GM12878 (cell line): ENCODE measurements at regions of chr7 and their contacts with region 1.

Region 1: DNA sequence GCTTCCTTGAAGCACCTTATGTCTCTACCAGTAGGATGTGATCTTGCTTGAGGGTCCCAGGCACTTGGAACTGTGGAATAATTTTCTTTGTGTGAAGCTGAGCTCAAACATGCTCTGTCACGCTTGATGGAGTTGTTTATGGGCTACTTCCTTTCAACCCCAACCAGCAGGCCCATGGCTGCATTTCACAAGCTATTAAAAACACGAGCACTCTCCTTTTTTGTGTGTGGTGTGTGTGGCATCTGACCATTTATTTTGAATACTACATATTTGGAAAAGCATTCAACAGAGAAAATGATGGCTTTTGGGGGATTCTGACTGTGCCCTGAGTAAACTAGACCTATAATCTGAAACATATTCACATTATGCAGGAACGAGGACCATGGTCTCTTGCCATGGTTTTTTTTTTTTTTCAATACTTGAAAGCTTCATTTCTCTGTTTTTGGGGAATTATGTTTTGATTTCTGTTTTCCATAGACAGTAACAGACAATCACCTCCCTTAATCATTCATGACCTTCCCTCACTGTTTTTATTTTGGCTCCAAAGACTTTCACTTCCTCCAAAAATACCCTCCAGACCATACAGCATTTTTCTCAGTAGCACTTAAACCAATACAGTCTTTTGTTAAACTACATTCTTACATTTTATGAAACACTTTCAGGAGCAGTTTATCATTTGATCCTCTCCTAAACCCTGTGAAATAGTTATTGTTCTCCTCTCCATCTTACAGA is 233.6 kb upstream of the BMPER start:
- DNase-seq: peak; percentile 42
- ATAC-seq: peak; percentile 75
- H3K4me3 ChIP-seq: no peak overlapping the region
- H3K27ac ChIP-seq: no peak overlapping the region
- H3K4me1 ChIP-seq: peaks cover 3% of the 10 kb centered on the region; the same call in 1 of the 2 replicates
- H3K27me3 ChIP-seq: no peaks in the 10 kb centered on the region
- CTCF ChIP-seq: no peak
- EP300 ChIP-seq: no peak
- POLR2A ChIP-seq: no peak
- RAD21 ChIP-seq: no peak

Region 2: DNA sequence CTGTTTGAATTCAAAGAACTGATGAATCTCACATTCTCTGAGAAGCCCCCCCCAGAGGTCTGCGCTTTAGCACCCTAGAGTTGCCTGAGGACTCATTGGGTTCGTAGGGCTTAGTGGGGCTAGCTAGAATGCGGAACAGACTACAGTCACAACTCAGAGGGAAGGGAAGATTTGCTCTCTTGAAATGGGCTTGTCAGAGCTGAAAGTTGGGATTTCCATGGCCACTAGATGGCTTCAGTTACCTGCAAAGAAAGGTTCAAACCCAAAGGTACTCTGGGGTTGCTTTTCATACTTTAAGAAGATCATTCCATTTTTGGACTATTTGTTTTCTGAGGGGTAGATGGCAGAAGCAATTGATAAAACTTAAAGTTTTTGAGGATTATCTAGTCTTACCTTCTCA is 337.3 kb before region 1 on chr7:
- CTCF ChIA-PET with region 1: no interaction called
- POLR2A ChIA-PET with region 1: no interaction called
- RAD21 ChIA-PET with region 1: no interaction called
- SMC1A ChIA-PET with region 1: no interaction called
- in situ Hi-C with region 1: no loop called
- intact Hi-C with region 1: no loop called
- DNase-seq: no peak
- ATAC-seq: peak; percentile 46; the same call in 2 of the 3 replicates
- H3K4me3 ChIP-seq: no peak overlapping the region
- H3K27ac ChIP-seq: no peak overlapping the region
- H3K4me1 ChIP-seq: no peaks in the 10 kb centered on the region
- H3K27me3 ChIP-seq: no peaks in the 10 kb centered on the region
- CTCF ChIP-seq: peak; percentile 24 to 49 (median 37); a peak in 5 of 6 replicates
- EP300 ChIP-seq: no peak
- POLR2A ChIP-seq: no peak
- RAD21 ChIP-seq: peak; percentile 57

Region 3: DNA sequence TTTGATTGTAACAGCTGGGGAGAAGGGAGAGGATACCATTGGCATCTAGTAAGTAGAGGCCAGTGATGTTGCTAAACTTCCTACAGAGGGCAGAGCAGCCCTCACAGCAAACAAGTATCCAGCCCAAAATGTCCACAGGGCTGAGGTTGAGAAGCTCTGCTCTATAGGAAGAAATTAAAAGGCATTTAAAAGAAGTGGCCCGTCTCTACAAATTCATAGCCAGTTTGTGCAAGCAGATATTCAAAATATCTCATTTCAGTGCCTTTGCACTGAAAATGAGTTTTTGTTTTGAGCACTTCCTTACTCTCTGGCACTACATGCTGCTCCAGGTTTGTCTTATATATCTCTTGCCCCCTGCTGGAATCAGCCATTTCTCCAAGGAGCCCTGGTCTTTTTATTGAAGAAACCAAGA is 212.4 kb before region 1 on chr7:
- CTCF ChIA-PET with region 1: interaction called, 7 read pairs
- POLR2A ChIA-PET with region 1: interaction called, 3 read pairs
- RAD21 ChIA-PET with region 1: interaction called, 10 read pairs
- SMC1A ChIA-PET with region 1: interaction called, 12 read pairs
- in situ Hi-C with region 1: no loop called
- intact Hi-C with region 1: loop called (anchors 1 kb)
- DNase-seq: no peak
- ATAC-seq: peak; percentile 93
- H3K4me3 ChIP-seq: no peak overlapping the region
- H3K27ac ChIP-seq: no peak overlapping the region
- H3K4me1 ChIP-seq: no peaks in the 10 kb centered on the region
- H3K27me3 ChIP-seq: no peaks in the 10 kb centered on the region
- CTCF ChIP-seq: peak; percentile 30 to 58 (median 56); a peak in 5 of 6 replicates
- EP300 ChIP-seq: no peak
- POLR2A ChIP-seq: no peak
- RAD21 ChIP-seq: peak; percentile 69

Region 4: DNA sequence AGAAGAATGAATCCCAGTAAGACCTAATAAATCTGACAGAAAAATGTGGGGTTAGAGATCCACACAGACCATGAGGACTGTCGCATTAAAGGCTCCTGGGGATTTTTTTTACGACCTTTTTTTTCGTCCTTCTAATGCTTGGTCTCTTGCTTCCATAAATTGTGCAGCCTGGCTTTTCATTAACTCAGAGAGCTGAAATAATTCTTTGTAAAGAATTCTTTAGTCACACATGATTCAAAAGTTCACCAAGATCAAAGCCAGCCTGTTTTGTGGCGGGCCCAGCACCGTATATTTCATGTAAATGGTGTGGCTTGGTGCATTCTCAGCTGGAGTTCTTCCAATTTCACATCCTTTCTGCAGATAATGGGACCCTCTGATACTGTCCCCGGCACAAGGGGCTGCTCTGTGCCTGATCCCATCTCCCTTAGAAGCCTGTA is 27.0 kb after region 1 on chr7:
- CTCF ChIA-PET with region 1: interaction called, 23 read pairs
- POLR2A ChIA-PET with region 1: interaction called, 3 read pairs
- RAD21 ChIA-PET with region 1: interaction called, 12 read pairs
- SMC1A ChIA-PET with region 1: interaction called, 15 read pairs
- in situ Hi-C with region 1: no loop called
- intact Hi-C with region 1: no loop called
- DNase-seq: no peak
- ATAC-seq: peak; percentile 85
- H3K4me3 ChIP-seq: no peak overlapping the region
- H3K27ac ChIP-seq: no peak overlapping the region
- H3K4me1 ChIP-seq: no peaks in the 10 kb centered on the region
- H3K27me3 ChIP-seq: no peaks in the 10 kb centered on the region
- CTCF ChIP-seq: no peak
- EP300 ChIP-seq: peak; percentile 28 to 57; a peak in 2 of 4 replicates
- POLR2A ChIP-seq: no peak
- RAD21 ChIP-seq: no peak

Region 5: GRCh38 chr7:33707427-33707826 is 35.7 kb after region 1 on chr7:
- CTCF ChIA-PET with region 1: interaction called, 5 read pairs
- POLR2A ChIA-PET with region 1: interaction called, 7 read pairs
- RAD21 ChIA-PET with region 1: no interaction called
- SMC1A ChIA-PET with region 1: interaction called, 10 read pairs
- in situ Hi-C with region 1: no loop called
- intact Hi-C with region 1: no loop called
- DNase-seq: no peak
- ATAC-seq: peak; percentile 56
- H3K4me3 ChIP-seq: no peak overlapping the region
- H3K27ac ChIP-seq: no peak overlapping the region
- H3K4me1 ChIP-seq: no peaks in the 10 kb centered on the region
- H3K27me3 ChIP-seq: no peaks in the 10 kb centered on the region
- CTCF ChIP-seq: no peak
- EP300 ChIP-seq: no peak
- POLR2A ChIP-seq: no peak
- RAD21 ChIP-seq: no peak

Region 6: DNA sequence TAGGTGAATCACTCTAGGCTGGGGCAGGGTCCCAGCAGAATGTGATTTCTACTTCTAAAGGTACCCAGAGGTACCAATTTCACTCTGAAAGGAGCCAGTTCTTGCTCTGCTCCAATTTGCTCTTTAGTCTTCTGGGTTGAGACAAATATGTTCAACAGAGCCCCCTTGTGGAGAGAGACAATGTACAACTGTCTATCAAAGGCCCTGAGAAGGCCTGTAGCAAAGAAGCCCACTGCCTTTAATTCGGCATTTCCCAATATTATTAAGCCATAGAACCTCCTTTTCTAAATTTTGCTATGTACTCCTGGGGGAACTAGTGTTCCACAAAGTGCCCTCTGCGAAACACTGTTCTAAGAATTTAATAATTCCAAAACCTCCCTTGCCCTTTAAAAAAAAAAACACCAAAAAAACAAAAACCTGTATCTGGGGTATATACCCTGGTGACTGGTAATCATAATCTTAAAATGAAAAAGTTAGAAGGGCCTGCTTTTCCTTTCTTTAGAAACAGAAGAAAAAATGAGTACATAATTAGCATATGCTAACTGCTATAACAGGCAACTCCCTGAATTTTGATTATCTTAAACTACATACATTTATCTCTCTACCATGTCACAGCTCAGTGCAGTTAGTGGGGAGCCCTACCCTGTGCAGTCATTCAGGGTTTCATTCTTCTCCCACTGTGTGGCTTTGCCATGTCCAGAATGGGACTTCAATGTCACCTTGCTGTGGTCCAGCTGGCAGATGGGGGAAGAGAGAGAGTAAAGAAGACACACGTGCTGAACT is 72.8 kb after region 1 on chr7:
- CTCF ChIA-PET with region 1: interaction called, 10 read pairs
- POLR2A ChIA-PET with region 1: no interaction called
- RAD21 ChIA-PET with region 1: no interaction called
- SMC1A ChIA-PET with region 1: no interaction called
- in situ Hi-C with region 1: no loop called
- intact Hi-C with region 1: no loop called
- DNase-seq: no peak
- ATAC-seq: peak; percentile 82
- H3K4me3 ChIP-seq: no peak overlapping the region
- H3K27ac ChIP-seq: no peak overlapping the region
- H3K4me1 ChIP-seq: no peaks in the 10 kb centered on the region
- H3K27me3 ChIP-seq: no peaks in the 10 kb centered on the region; a peak in 1 of 4 replicates
- CTCF ChIP-seq: peak; percentile 27 to 47 (median 32); a peak in 4 of 6 replicates
- EP300 ChIP-seq: no peak
- POLR2A ChIP-seq: no peak
- RAD21 ChIP-seq: peak; percentile 60